Naive thymus-derived CD4-positive, alpha-beta T cell (primary cell): ENCODE measurements at regions of chr12 and their contacts with region 1.

Region 1: DNA sequence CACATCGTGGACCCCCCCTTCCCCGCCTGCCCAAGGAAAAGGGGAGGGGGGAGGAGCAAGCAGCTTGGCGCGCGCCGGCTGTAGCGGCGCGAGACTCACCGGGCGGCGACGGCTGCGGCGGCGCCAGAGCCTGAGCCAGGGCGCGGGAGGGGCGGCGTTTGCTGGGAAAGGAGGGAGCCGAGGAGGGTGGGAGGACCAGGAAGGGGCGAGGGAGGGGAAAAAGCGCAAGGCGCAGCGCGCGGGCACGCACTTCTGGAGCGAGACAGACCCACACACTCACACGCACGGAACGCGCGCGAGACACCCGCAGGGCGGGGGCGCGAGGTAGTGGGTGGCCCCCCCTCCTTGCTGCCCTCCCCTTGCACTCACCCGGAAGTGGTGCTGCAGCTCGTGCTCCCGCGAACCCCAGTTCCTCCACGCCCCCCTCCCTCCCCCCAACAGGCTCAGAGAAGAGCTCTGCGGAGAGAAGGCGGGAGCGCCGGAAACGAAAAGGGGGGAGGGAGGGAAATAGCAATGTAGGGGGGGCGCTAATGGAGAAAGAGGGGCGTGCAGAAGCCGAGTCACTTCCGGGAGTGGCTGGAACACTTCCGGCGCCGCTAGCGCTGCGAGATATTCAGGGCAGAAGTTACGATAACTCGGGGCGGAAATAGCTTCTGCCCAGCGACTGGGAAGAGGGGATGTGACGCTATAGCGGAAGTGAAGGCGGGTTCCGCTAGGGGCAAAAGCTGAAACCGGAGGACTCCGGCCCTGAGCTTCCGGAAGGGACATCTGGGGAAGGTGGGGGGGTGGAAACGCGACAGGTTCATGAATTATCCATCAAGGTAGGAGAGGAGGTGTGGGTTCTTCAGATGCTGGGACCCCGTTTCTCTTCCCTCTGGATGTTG is at the start of gene ZNF384:
- DNase-seq: peak; percentile 83 to 98 (median 96)
- ATAC-seq: peak; percentile 91
- H3K4me3 ChIP-seq: peak within 1 kb of the TSS; percentile 84
- H3K4me3 Mint-ChIP-seq: peak within 1 kb of the TSS; percentile 85 to 100 (median 96)
- H3K27ac ChIP-seq: peak within 1 kb of the TSS; percentile 91
- H3K27ac Mint-ChIP-seq: peak within 1 kb of the TSS; percentile 93 to 99 (median 98)
- H3K4me1 ChIP-seq: peaks cover 17 to 19% of the 10 kb centered on the region in 2 donors
- H3K4me1 Mint-ChIP-seq: peaks cover 37 to 69% (median 53%) of the 10 kb centered on the region in 7 donors
- H3K27me3 ChIP-seq: no peaks in the 10 kb centered on the region
- H3K27me3 Mint-ChIP-seq: no peaks in the 10 kb centered on the region
- total RNA-seq, gene ZNF384: 62.8 to 98.2 (median 85.4) TPM

Region 2: DNA sequence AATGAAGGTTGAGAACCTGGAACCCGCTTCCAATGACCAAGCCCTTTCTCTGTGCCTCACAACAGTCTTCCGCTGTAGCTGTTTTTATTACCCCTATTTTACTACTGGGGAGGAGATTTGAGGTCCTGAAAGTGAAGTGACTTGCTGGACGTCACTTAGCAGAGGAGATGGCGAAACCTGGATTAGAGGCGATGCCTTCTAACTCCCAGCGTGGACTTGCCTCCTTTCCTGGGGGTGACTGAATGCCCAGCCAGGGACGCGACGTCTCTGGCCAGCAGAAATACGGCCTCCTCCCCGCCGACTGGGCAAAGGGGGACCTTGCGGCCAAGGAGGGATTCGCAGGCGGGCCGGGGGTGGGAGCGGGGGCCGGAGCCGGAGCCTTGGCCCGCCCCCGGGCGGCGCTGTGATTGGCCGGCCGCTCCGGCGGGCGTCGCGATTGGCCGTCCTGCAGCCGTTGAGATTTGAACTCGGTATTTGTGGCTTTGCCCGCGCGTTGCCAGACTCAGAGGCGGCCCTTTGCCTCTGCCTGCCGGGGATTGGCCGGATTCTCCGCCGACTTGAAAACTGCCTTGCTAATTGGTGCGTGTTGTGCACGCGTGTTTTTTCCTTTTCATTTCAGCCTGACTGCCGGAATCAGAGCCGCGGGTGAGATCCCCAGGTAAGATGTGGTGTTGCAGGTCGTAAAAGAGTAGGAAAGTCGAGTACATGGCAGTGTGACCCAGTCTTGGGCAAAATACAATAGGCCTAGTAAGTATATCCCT is 195.6 kb before region 1 on chr12 and contains the start of gene NCAPD2:
- CTCF ChIA-PET with region 1: no interaction called
- POLR2A ChIA-PET with region 1: no interaction called
- intact Hi-C with region 1: loop called (anchors 1 kb)
- DNase-seq: peak; percentile 82 to 97 (median 96)
- ATAC-seq: peak; percentile 91
- H3K4me3 ChIP-seq: peak within 1 kb of the TSS; percentile 98
- H3K4me3 Mint-ChIP-seq: peak within 1 kb of the TSS; percentile 86 to 98 (median 96)
- H3K27ac ChIP-seq: peak within 1 kb of the TSS; percentile 83
- H3K27ac Mint-ChIP-seq: peak within 1 kb of the TSS; percentile 87 to 97 (median 96)
- H3K4me1 ChIP-seq: peaks cover 22 to 24% of the 10 kb centered on the region in 2 donors
- H3K4me1 Mint-ChIP-seq: peaks cover 18 to 44% (median 37%) of the 10 kb centered on the region in 7 donors
- H3K27me3 ChIP-seq: no peaks in the 10 kb centered on the region
- H3K27me3 Mint-ChIP-seq: no peaks in the 10 kb centered on the region
- total RNA-seq, gene NCAPD2: 30.3 to 121 (median 38.4) TPM

Region 3: GRCh38 chr12:6613776-6614512 is 75.3 kb before region 1 on chr12:
- CTCF ChIA-PET with region 1: interaction called, 5 read pairs
- POLR2A ChIA-PET with region 1: interaction called, 9 read pairs
- intact Hi-C with region 1: loop called (anchors 1 kb)
- DNase-seq: peak in 2 of 9 donors; percentile 28 to 32
- ATAC-seq: peak; percentile 74
- H3K4me3 ChIP-seq: no peak overlapping the region
- H3K4me3 Mint-ChIP-seq: peak overlapping the region in 7 of 10 donors; percentile 30 to 70 (median 36)
- H3K27ac ChIP-seq: peak overlapping the region; percentile 64
- H3K27ac Mint-ChIP-seq: peak overlapping the region; percentile 51 to 91 (median 87)
- H3K4me1 ChIP-seq: peaks cover 20 to 30% of the 10 kb centered on the region in 2 donors
- H3K4me1 Mint-ChIP-seq: peaks cover 26 to 54% (median 48%) of the 10 kb centered on the region in 7 donors
- H3K27me3 ChIP-seq: no peaks in the 10 kb centered on the region
- H3K27me3 Mint-ChIP-seq: no peaks in the 10 kb centered on the region

Region 4: GRCh38 chr12:6778574-6779550 is 89.6 kb after region 1 on chr12:
- CTCF ChIA-PET with region 1: no interaction called
- POLR2A ChIA-PET with region 1: interaction called, 4 read pairs
- intact Hi-C with region 1: loop called (anchors 2 kb)
- DNase-seq: peak; percentile 73 to 88 (median 84)
- ATAC-seq: peak; percentile 95
- H3K4me3 ChIP-seq: peak overlapping the region; percentile 69
- H3K4me3 Mint-ChIP-seq: peak overlapping the region; percentile 85 to 94 (median 87)
- H3K27ac ChIP-seq: peak overlapping the region; percentile 27
- H3K27ac Mint-ChIP-seq: peak overlapping the region; percentile 75 to 96 (median 86)
- H3K4me1 ChIP-seq: peaks cover 18 to 56% of the 10 kb centered on the region in 2 donors
- H3K4me1 Mint-ChIP-seq: peaks cover 36 to 77% (median 60%) of the 10 kb centered on the region in 7 donors
- H3K27me3 ChIP-seq: no peaks in the 10 kb centered on the region
- H3K27me3 Mint-ChIP-seq: peaks cover 0 to 15% (median 5%) of the 10 kb centered on the region in 5 donors

Region 5: GRCh38 chr12:6873094-6874014 is 184.1 kb after region 1 on chr12 and contains the start of gene SPSB2:
- CTCF ChIA-PET with region 1: no interaction called
- POLR2A ChIA-PET with region 1: interaction called, 12 read pairs
- intact Hi-C with region 1: loop called in 1 of 2 experiments (anchors 1 kb)
- DNase-seq: peak; percentile 96 to 100 (median 98)
- ATAC-seq: peak; percentile 97
- H3K4me3 ChIP-seq: peak within 1 kb of the TSS; percentile 98
- H3K4me3 Mint-ChIP-seq: peak within 1 kb of the TSS; percentile 87 to 95 (median 91)
- H3K27ac ChIP-seq: peak within 1 kb of the TSS; percentile 77
- H3K27ac Mint-ChIP-seq: peak within 1 kb of the TSS; percentile 79 to 94 (median 88)
- H3K4me1 ChIP-seq: peaks cover 32 to 34% of the 10 kb centered on the region in 2 donors
- H3K4me1 Mint-ChIP-seq: peaks cover 34 to 58% (median 47%) of the 10 kb centered on the region in 7 donors
- H3K27me3 ChIP-seq: no peaks in the 10 kb centered on the region
- H3K27me3 Mint-ChIP-seq: no peaks in the 10 kb centered on the region
- total RNA-seq, gene SPSB2: 5.1 to 20.2 (median 11.2) TPM

Region 6: DNA sequence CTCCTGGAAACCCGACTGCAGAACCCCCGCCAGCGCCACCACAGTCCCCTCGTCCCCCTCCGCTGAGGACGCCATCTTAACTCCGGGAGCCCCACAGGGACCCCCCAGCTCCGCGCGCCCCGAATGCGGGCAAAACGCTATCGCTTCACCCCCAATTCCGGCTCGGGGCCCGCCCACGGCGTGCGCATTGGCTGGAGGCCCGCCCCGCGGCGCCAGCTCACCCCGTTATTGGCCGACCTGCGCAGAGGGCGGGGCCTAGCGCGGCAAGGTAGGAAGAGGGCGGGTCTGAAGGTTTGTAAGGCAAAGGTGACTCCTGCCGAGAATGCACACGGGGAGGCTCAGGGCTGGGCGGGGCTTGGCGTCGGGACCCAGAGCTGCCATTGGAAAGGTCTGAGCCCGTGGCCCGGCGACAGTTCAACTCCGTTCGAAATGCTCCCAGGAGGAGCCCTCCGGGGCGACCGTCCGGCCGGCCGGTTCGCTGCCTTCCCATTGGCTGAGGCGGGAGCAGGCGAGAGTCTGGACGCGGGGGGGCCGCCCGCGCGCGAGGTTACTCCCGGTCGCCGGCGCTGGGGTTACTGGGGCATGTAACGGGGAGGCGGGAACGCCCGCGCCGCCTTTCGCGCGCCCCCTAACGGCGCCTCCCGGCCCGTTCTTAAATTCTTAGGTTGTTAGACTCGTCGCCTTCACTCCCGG is 329.3 kb after region 1 on chr12 and contains the start of gene LPCAT3:
- CTCF ChIA-PET with region 1: no interaction called
- POLR2A ChIA-PET with region 1: no interaction called
- intact Hi-C with region 1: loop called in 1 of 2 experiments (anchors 1 kb)
- DNase-seq: peak; percentile 93 to 99 (median 98)
- ATAC-seq: peak; percentile 97
- H3K4me3 ChIP-seq: peak within 1 kb of the TSS; percentile 95
- H3K4me3 Mint-ChIP-seq: peak within 1 kb of the TSS; percentile 84 to 100 (median 94)
- H3K27ac ChIP-seq: peak within 1 kb of the TSS; percentile 89
- H3K27ac Mint-ChIP-seq: peak within 1 kb of the TSS; percentile 75 to 96 (median 93)
- H3K4me1 ChIP-seq: peaks cover 11 to 12% of the 10 kb centered on the region in 2 donors
- H3K4me1 Mint-ChIP-seq: peaks cover 25 to 46% (median 41%) of the 10 kb centered on the region in 7 donors
- H3K27me3 ChIP-seq: no peaks in the 10 kb centered on the region
- H3K27me3 Mint-ChIP-seq: no peaks in the 10 kb centered on the region
- total RNA-seq, gene LPCAT3: 16.7 to 37.9 (median 27.1) TPM